Colonic mucosa (tissue), 4 donors: ENCODE measurements at regions of chr1 and their contacts with region 1.

Region 1: DNA sequence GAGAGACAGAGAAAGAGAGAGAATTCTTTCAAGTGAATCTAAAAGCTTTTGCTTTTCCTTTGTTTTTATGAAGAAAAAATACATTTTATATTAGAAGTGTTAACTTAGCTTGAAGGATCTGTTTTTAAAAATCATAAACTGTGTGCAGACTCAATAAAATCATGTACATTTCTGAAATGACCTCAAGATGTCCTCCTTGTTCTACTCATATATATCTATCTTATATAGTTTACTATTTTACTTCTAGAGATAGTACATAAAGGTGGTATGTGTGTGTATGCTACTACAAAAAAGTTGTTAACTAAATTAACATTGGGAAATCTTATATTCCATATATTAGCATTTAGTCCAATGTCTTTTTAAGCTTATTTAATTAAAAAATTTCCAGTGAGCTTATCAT is 117.6 kb downstream of the PTPRC start:
- DNase-seq: no peak
- H3K4me3 ChIP-seq: no peak overlapping the region
- H3K27ac ChIP-seq: no peak overlapping the region
- H3K4me1 ChIP-seq: no peaks in the 10 kb centered on the region
- H3K27me3 ChIP-seq: no peaks in the 10 kb centered on the region
- CTCF ChIP-seq: peak; percentile 32

Region 2: DNA sequence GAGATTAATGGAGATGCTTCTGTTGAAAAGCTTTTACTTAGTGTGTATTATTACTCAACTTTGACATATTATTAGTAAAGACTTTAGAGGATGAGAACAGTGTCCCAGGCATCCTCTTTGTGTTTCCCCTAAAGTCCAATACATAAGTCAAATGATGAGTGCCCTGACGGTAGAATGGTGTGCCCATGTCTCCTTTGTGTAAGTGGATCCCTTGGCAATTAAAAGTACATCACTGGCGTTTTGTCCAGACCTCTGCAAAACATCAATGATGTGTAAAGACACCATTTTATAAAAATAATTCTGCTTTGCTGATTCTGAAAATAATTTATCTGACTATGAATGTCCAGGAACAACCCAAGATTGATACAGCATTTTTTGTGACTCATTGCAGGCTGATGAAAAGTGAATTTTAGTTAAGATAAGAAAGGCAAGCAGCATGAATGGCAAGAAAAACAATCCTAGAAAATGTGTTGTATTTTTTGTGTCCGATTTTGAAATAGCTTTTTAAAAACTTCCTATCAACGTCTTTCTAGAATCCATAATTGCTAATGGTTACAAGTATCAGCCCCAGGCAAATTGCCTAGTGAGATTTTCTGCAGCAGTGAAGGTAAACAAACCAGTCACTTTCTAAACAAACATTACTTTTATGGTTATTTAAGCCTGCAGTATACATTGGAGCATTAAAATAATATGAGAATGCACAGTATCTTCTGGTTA is 133.9 kb after region 1 on chr1:
- intact Hi-C with region 1: no loop called
- DNase-seq: no peak
- H3K4me3 ChIP-seq: no peak overlapping the region
- H3K27ac ChIP-seq: no peak overlapping the region
- H3K4me1 ChIP-seq: no peaks in the 10 kb centered on the region
- H3K27me3 ChIP-seq: no peaks in the 10 kb centered on the region
- CTCF ChIP-seq: no peak

Region 3: DNA sequence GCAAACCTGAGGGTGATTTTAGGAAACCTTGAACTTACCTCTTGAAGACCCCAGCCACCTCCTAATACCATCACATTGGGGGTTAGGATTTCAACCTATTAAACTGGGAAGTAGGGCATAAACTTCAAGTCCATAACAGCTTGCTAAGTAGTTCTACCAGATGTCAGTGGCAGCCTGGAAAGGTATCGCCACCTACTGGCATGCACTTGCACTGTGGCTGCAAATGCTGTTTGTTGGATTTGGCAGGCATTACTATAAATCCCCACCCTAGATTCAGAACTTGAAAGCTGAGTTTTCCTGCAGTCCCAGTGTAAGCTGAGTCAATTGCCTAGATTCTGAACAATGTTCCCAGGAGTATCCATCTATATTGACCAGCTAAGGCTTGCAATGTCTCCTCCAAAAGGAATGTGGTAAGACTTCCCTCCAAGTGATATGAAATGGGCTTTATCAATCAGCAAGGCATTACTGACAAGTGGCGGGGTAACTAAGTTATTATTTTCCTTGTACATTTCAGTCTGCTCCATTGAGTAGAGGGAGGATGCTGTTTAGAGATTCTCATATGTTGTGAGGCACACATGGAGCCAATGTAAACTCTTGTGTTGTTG is 356.9 kb after region 1 on chr1:
- intact Hi-C with region 1: loop called (anchors 5 kb)
- DNase-seq: peak; percentile 61
- H3K4me3 ChIP-seq: no peak overlapping the region
- H3K27ac ChIP-seq: no peak overlapping the region
- H3K4me1 ChIP-seq: no peaks in the 10 kb centered on the region
- H3K27me3 ChIP-seq: no peaks in the 10 kb centered on the region
- CTCF ChIP-seq: peak; percentile 82

Region 4: DNA sequence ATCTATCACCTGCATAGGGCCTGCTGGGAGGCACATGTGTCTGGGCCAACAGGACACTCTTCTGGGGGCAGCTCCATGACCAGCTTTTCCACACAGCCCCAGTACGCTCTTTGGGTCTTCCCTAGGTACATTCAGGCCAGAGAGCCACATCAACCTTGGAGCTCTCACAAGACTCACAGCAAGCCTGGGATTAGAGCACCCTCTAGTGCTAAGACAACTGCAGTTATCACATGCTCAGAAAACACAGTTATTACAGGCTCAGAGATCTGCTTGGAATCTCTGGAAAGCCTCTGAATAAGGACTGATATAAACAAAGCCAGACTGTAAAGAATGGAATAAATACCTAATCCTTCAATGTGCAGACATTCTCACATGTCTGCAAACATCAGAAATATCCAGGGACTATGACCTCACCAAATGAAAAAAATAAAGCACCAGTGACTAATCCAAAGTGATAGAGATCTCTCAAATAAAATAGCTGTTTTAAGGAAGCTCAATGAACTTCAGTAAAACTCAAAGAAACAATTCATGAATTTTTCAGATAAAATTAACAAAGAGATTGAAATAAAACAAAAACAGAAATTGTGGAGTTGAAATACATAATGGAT is 707.2 kb after region 1 on chr1:
- intact Hi-C with region 1: loop called (anchors 10 kb)
- DNase-seq: peak; percentile 24
- H3K4me3 ChIP-seq: no peak overlapping the region
- H3K27ac ChIP-seq: no peak overlapping the region
- H3K4me1 ChIP-seq: no peaks in the 10 kb centered on the region
- H3K27me3 ChIP-seq: no peaks in the 10 kb centered on the region
- CTCF ChIP-seq: no peak

Region 5: GRCh38 chr1:199551967-199552565 is 795.6 kb after region 1 on chr1:
- intact Hi-C with region 1: loop called (anchors 5 kb)
- DNase-seq: peak; percentile 37
- H3K4me3 ChIP-seq: no peak overlapping the region
- H3K27ac ChIP-seq: no peak overlapping the region
- H3K4me1 ChIP-seq: no peaks in the 10 kb centered on the region
- H3K27me3 ChIP-seq: no peaks in the 10 kb centered on the region
- CTCF ChIP-seq: peak; percentile 49